ENCODE measurements at regions of chr3 and their contacts with region 1.

Region 1: DNA sequence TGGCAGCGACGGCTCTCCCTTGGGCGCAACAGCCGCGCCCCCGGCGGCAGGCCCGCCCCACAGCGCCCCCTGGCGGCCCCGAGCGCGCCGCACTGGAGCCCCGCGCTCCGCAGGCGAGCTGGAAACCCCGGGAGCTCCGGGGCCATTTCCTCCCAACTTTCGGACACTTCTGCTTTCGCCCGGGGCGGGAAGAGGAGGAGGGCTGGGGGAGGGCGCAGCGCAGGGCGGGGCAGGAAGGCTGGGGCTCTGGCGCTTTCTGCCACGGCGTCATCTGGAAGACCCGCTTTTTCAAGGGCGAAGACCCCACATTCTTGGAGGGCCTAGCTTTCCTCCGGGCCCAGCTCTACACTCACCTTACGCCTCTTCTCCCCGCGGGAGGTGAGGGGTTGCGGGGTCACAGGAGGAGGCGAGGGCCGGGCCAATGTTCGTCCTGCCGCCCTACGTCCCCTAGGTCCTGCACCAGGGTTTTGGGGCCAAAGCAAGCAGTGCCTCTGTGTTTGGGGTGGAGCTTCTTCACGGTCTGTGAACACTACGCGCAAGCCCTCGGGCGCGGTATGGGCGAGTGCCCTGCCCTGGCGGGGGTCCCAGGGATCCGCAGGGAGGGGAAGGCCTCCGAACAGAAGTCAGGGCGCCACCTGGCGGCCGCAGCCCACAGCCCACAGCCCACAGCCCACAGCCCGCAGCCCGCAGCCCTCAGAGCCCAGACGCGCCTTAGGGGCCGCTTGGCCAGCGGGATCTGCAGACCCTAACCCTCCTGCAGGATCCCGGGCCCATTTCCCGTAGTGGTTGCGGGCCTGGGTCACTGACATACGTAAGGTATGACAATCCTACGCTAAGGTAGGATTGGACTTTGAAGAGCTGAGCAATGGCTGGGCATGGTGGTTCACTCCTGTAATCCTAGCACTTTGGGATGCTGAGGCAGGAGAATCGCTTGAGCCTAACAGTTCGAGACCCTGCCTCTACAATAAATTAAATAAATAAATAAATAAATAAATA is 31.1 kb downstream of the FOXL2 start:
- DNase-seq: peak; percentile 58
- ATAC-seq: peak; percentile 94
- H3K4me3 ChIP-seq: peak overlapping the region; percentile 69 to 80
- H3K27ac ChIP-seq: peak overlapping the region; percentile 89
- H3K4me1 ChIP-seq: peaks cover 25% of the 10 kb centered on the region
- H3K27me3 ChIP-seq: no peaks in the 10 kb centered on the region
- CTCF ChIP-seq: peak; percentile 99

Region 2: DNA sequence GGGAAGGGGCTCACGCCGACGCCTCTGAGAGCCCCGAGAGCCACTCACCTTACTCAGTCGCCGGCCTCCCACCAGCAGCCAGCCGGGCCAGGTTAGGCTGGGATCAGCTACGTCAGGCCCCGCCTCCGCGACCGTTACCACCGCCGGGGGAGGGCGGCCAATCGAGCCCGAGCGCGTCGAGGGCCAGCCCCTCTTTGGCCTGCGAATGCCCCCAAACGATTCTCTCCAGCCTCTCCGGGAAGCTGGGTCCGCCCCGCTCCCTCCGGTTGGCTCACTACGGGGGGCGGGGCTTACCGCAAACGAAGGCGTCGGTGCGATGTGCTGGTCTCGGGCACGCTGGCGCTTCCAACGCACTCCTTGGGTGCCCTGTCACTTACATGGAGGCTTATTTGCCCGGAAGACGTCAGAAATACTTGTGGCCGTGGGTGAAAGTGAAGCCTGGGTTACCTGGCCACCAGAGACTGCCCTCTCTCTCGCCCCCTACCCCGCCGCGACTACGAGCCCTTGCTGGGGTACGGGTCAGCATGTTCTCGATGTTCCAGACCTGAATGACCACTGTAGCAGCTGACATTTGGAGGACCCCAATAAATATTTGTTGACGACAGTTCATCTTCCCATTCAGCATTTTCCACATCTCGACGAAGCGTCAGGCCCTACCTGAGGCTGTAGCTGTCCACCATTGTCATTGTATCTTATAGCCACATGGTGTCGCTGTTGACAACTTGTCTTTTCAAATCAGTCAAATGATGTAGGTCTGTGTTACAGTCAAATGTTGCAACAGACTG is 321.5 kb before region 1 on chr3 and contains the start of gene CEP70:
- CTCF ChIA-PET with region 1: interaction called, 31 read pairs
- POLR2A ChIA-PET with region 1: no interaction called
- in situ Hi-C with region 1: no loop called
- intact Hi-C with region 1: no loop called
- DNase-seq: peak; percentile 87
- ATAC-seq: peak; percentile 98
- H3K4me3 ChIP-seq: peak within 1 kb of the TSS; percentile 88 to 93
- H3K27ac ChIP-seq: peak within 1 kb of the TSS; percentile 96
- H3K4me1 ChIP-seq: peaks cover 23% of the 10 kb centered on the region
- H3K27me3 ChIP-seq: no peaks in the 10 kb centered on the region
- CTCF ChIP-seq: peak; percentile 91
- total RNA-seq, gene CEP70: 64.5 TPM

Region 3: DNA sequence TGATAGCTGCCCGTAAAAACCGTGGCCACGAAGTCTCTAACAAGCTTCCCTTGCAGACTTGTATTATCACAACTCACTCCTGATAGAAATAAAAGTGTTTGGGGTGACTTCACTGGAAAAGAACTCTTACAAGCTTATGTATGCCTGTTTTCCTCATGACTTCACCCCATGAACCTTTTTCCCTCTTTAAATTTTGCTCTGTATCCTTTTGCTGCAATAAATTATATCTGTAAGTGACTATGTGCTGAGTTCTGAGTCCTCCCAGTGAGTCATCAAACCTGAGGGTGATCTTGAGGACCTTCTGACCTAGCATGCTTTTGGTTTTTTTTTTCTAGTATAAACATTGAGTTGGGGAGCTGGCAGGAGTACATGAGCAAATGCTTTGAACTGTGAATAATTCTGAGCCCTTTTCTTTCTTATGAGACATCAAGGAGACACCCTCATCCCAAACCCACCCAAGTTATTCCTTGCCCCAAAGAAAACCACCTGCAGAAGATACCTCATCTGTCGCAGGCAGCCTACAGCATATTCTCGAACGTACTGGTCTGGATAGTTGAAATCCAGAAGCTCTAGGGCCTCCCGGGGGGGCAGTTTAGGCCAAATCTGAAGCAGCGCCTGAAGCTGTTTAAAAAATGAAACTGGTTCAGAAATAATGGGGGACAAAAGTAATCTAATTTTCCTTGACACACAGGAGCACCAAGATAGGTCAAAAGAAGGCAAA is 221.4 kb before region 1 on chr3:
- CTCF ChIA-PET with region 1: interaction called, 19 read pairs
- POLR2A ChIA-PET with region 1: no interaction called
- in situ Hi-C with region 1: no loop called
- intact Hi-C with region 1: loop called (anchors 2 kb)
- DNase-seq: peak; percentile 72
- ATAC-seq: peak; percentile 91
- H3K4me3 ChIP-seq: no peak overlapping the region
- H3K27ac ChIP-seq: peak overlapping the region; percentile 67
- H3K4me1 ChIP-seq: peaks cover 14% of the 10 kb centered on the region
- H3K27me3 ChIP-seq: no peaks in the 10 kb centered on the region
- CTCF ChIP-seq: no peak

Region 4: GRCh38 chr3:138747225-138747624 is 168.6 kb before region 1 on chr3:
- CTCF ChIA-PET with region 1: no interaction called
- POLR2A ChIA-PET with region 1: no interaction called
- in situ Hi-C with region 1: no loop called
- intact Hi-C with region 1: loop called (anchors 1 kb)
- DNase-seq: no peak
- ATAC-seq: no peak
- H3K4me3 ChIP-seq: no peak overlapping the region
- H3K27ac ChIP-seq: no peak overlapping the region
- H3K4me1 ChIP-seq: no peaks in the 10 kb centered on the region
- H3K27me3 ChIP-seq: no peaks in the 10 kb centered on the region
- CTCF ChIP-seq: no peak

Region 5: GRCh38 chr3:138842483-138843188 is 73.2 kb before region 1 on chr3:
- CTCF ChIA-PET with region 1: interaction called, 3 read pairs
- POLR2A ChIA-PET with region 1: interaction called, 16 read pairs
- in situ Hi-C with region 1: no loop called
- intact Hi-C with region 1: no loop called
- DNase-seq: no peak
- ATAC-seq: 0 out of 2 replicates have a peak, but pooled peaks have one; percentile 52
- H3K4me3 ChIP-seq: no peak overlapping the region
- H3K27ac ChIP-seq: no peak overlapping the region
- H3K4me1 ChIP-seq: no peaks in the 10 kb centered on the region
- H3K27me3 ChIP-seq: no peaks in the 10 kb centered on the region
- CTCF ChIP-seq: no peak

Region 6: DNA sequence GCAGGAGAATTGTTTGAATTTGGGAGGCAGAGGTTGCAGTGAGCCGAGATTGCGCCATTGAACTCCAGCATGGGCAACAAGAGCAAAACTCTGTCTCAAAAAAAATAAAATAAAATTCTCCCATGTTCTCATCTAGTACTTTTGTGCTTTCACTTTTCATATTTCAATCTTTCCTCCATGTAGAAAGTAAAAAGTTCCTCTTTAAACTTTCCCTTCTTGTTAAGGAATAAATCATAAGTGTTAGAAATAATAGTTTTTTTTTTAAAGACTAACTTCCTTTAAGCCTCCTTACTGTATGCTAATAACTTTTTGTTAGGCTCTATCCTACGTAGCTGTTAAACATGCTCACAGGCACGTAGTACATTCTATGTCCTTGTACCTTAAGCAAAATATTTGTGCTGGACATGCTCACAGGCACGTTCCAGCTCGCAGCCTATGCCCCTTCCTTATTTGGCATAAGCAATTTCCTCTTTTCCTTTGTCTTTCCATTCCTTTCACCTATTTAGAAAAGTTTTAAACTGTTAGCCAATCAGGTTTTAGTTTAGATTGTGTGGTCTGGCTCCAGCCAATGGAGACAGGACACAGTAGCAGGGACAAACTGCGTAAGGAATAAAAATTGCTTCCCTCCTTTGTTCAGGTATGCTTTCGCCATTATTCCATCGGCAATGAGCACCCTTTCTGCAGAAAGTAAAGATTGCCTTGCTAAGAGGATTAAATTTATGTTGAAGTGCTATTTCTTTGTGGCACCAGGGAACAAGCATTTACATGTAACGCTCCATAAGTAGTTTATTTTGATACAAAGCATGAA is 42.1 kb before region 1 on chr3:
- CTCF ChIA-PET with region 1: no interaction called
- POLR2A ChIA-PET with region 1: no interaction called
- in situ Hi-C with region 1: no loop called
- intact Hi-C with region 1: no loop called
- DNase-seq: no peak
- ATAC-seq: no peak
- H3K4me3 ChIP-seq: no peak overlapping the region
- H3K27ac ChIP-seq: no peak overlapping the region
- H3K4me1 ChIP-seq: no peaks in the 10 kb centered on the region
- H3K27me3 ChIP-seq: no peaks in the 10 kb centered on the region
- CTCF ChIP-seq: no peak

Region 7: DNA sequence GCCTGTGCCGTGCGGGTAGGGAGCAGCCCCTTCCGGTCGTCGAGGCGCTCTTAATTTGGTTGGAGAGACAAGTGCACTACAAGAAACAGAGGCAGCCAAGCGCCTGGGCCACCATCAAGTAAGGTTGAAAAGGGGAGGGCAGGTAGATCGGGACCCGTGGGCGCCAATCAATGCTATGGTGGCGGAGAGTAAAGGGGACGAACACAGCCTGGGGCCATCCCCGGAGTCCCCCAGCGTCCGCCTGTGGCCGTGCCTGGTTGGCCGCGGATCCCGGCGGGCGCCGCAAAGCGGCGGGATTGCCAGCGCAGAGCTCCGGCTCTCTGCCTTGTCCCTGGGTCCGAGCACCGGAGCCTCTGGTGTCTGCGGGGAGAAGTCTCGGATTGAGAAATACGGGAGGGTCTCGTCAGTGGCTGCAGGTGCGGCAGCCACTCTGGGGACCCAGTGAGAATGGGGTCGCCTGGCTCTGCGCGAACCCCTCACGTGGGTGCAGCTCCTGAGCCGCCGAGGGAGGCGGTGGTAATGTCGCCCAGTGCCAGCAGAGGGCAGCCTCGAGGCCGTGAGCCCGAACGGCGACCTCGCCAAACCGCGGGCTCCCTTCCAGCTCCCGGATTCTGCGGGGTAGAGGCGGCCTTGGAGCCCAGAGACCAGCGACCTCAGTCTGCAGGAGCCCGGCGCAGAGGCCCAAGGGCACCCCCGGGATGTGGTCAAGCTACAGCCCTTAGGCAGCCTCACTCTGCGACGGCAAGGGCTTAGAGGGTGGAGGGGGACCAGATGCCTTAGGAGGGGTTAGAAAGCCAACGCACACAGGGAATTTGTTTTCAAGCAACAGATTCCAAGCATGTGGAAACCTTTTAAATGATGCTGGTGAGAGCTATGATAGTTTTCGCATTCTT is 20.3 kb after region 1 on chr3:
- CTCF ChIA-PET with region 1: interaction called, 3 read pairs
- POLR2A ChIA-PET with region 1: interaction called, 10 read pairs
- in situ Hi-C with region 1: no loop called
- intact Hi-C with region 1: no loop called
- DNase-seq: no peak
- ATAC-seq: peak; percentile 88
- H3K4me3 ChIP-seq: peak overlapping the region; percentile 45 to 57
- H3K27ac ChIP-seq: peak overlapping the region; percentile 75
- H3K4me1 ChIP-seq: peaks cover 14% of the 10 kb centered on the region
- H3K27me3 ChIP-seq: no peaks in the 10 kb centered on the region
- CTCF ChIP-seq: peak; percentile 98